ENCODE measurements at regions of chr11 and their contacts with region 1.

Region 1: DNA sequence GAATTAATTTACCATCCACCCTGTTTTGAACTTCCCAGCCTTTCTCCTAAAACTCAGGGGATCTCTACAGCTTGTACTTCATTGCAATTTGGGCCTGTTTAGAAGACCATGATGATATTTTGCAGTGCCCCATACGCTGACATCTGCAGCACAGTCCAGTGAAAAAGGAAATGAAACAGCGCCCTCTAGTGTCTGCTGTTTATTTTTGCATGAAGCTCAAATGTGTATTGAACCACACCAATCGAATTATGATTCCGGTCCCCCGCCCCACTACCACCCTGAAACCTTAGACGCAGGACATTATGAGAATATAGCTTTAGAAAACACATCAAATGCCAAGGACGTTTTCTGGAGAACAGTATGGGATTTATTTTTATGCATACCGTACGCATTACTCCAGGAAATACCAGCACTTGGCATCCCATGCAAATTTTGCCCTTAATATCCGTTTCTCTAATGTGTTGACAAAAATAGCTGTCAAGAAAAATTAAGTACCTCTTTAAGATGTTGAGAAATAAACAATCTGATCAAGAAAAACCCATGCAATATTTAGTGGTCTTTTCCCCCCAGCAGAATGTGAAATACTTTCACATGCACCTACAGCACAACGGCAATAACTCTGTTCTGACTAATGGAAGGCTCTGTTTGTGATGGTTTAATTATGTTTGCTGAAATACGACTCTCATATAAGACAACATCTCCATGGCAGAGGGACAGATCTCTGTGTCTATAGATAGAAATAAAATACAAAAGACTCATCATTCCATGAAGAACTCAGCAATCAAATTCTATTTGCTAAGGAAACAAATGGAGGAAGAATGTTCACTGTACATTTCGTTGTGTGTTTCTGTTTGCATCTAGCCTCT is 93.9 kb downstream of the TECTA start:
- DNase-seq: peak; percentile 69
- H3K4me3 ChIP-seq: no peak overlapping the region; a peak in 1 of 4 replicates
- H3K27ac ChIP-seq: no peak overlapping the region
- H3K4me1 ChIP-seq: peaks cover 0 to 2% of the 10 kb centered on the region in 2 experiments; a peak in 2 of 4 replicates
- H3K27me3 ChIP-seq: no peaks in the 10 kb centered on the region; the same call in 1 of the 2 replicates
- CTCF ChIP-seq: peak; percentile 90
- EP300 ChIP-seq: no peak
- RAD21 ChIP-seq: peak; percentile 86

Region 2: GRCh38 chr11:120929664-120930154 is 265.3 kb before region 1 on chr11:
- CTCF ChIA-PET with region 1: interaction called, 13 read pairs
- POLR2A ChIA-PET with region 1: no interaction called
- DNase-seq: peak; percentile 72
- H3K4me3 ChIP-seq: no peak overlapping the region
- H3K27ac ChIP-seq: no peak overlapping the region
- H3K4me1 ChIP-seq: peaks cover 0 to 16% of the 10 kb centered on the region in 2 experiments; a peak in 2 of 4 replicates
- H3K27me3 ChIP-seq: no peaks in the 10 kb centered on the region
- CTCF ChIP-seq: peak; percentile 59
- EP300 ChIP-seq: no peak
- RAD21 ChIP-seq: peak; percentile 53

Region 3: DNA sequence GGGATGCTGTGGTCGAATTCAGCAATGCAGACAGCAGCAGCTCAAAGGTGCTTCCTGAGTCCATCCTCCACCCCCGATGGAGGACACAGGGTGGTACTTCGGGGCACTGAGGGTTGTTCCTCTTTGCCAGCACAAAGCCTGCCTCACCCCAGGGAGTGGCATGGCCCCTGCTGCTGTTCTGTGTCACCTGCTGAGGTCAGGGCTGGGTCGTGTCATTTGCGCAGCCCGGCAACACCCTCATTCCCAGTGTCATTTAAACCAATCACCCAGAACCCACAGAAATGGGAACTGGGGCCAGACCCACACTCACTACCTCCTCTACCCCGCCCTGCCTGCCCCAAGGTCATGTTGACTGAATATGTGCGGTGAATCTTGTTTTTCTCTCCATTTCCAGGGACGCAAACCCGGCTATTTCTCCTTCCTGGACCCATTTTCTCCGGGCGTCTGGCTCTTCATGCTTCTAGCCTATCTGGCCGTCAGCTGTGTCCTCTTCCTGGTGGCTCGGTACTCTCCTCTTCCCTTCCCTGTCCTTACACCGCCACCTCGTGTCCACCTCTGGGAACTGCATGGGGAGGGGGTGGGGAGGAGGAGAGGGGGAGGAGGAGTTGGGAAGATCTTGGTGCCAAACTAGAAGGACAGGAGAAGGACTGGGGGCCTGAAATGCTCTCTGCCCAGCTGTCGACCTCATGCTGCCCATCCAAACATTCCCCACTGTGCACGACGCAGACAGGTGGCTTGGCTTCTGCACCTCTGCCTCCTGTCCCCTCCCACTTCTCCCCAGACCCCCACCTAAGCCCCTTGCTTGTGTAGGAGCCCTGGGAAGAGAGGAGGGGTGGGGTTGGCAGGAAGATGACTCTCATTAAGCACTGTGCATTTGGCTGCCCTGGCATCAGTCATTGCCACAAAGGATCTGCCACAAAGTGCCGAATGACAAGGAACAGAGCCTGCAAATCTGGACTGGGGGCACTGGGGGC is 242.2 kb before region 1 on chr11:
- CTCF ChIA-PET with region 1: interaction called, 26 read pairs
- POLR2A ChIA-PET with region 1: no interaction called
- DNase-seq: peak; percentile 89
- H3K4me3 ChIP-seq: peak overlapping the region in 1 of 2 experiments; percentile 54; a peak in 1 of 4 replicates
- H3K27ac ChIP-seq: peak overlapping the region in 1 of 2 experiments; percentile 62; a peak in 2 of 4 replicates
- H3K4me1 ChIP-seq: peaks cover 0 to 34% of the 10 kb centered on the region in 2 experiments; a peak in 1 of 4 replicates
- H3K27me3 ChIP-seq: no peaks in the 10 kb centered on the region; the same call in 1 of the 2 replicates
- CTCF ChIP-seq: peak; percentile 73
- EP300 ChIP-seq: no peak
- RAD21 ChIP-seq: peak; percentile 93

Region 4: GRCh38 chr11:121119440-121119839 is 75.5 kb before region 1 on chr11:
- CTCF ChIA-PET with region 1: interaction called, 37 read pairs
- POLR2A ChIA-PET with region 1: no interaction called
- DNase-seq: peak; percentile 51
- H3K4me3 ChIP-seq: no peak overlapping the region
- H3K27ac ChIP-seq: no peak overlapping the region
- H3K4me1 ChIP-seq: no peaks in the 10 kb centered on the region; a peak in 1 of 4 replicates
- H3K27me3 ChIP-seq: no peaks in the 10 kb centered on the region
- CTCF ChIP-seq: no peak
- EP300 ChIP-seq: no peak
- RAD21 ChIP-seq: peak; percentile 21; the same call in 1 of the 2 replicates

Region 5: GRCh38 chr11:121179306-121179705 is 15.7 kb before region 1 on chr11:
- CTCF ChIA-PET with region 1: interaction called, 13 read pairs
- POLR2A ChIA-PET with region 1: no interaction called
- DNase-seq: no peak
- H3K4me3 ChIP-seq: no peak overlapping the region
- H3K27ac ChIP-seq: no peak overlapping the region
- H3K4me1 ChIP-seq: no peaks in the 10 kb centered on the region
- H3K27me3 ChIP-seq: no peaks in the 10 kb centered on the region
- CTCF ChIP-seq: no peak
- EP300 ChIP-seq: no peak
- RAD21 ChIP-seq: no peak

Region 6: DNA sequence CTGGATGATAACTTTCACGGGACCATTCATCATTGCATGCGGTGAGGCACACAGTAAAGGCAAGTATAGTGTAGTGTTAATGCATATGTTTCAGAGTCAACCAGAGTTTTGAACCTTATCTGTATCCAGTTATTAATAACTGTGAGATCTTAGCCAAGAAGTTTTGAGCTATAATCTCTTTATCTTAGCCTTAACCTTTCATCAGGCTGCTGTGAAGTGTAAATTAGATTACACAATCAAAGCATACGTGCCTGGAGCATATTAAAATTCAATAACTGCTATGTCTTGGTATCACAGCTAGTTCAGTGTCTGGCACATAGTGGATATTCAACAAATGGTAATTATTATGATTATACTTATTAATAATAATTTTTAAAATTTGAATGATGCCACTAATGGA is 26.8 kb after region 1 on chr11:
- CTCF ChIA-PET with region 1: interaction called, 26 read pairs
- POLR2A ChIA-PET with region 1: no interaction called
- DNase-seq: no peak
- H3K4me3 ChIP-seq: no peak overlapping the region
- H3K27ac ChIP-seq: no peak overlapping the region
- H3K4me1 ChIP-seq: peaks cover 0 to 13% of the 10 kb centered on the region in 2 experiments; a peak in 1 of 4 replicates
- H3K27me3 ChIP-seq: no peaks in the 10 kb centered on the region; the same call in 1 of the 2 replicates
- CTCF ChIP-seq: no peak
- EP300 ChIP-seq: peak in 1 of 2 experiments; percentile 23; a peak in 1 of 4 replicates
- RAD21 ChIP-seq: no peak

Region 7: GRCh38 chr11:121563900-121564822 is 369.2 kb after region 1 on chr11:
- CTCF ChIA-PET with region 1: no interaction called
- POLR2A ChIA-PET with region 1: no interaction called
- DNase-seq: no peak
- H3K4me3 ChIP-seq: no peak overlapping the region
- H3K27ac ChIP-seq: no peak overlapping the region
- H3K4me1 ChIP-seq: peaks cover 0 to 2% of the 10 kb centered on the region in 2 experiments; a peak in 1 of 4 replicates
- H3K27me3 ChIP-seq: no peaks in the 10 kb centered on the region
- CTCF ChIP-seq: no peak
- EP300 ChIP-seq: no peak
- RAD21 ChIP-seq: no peak

Region 8: GRCh38 chr11:121591405-121592033 is 396.6 kb after region 1 on chr11:
- CTCF ChIA-PET with region 1: interaction called, 10 read pairs
- POLR2A ChIA-PET with region 1: no interaction called
- DNase-seq: peak; percentile 78
- H3K4me3 ChIP-seq: no peak overlapping the region
- H3K27ac ChIP-seq: no peak overlapping the region
- H3K4me1 ChIP-seq: peaks cover 2 to 7% of the 10 kb centered on the region in 2 experiments; a peak in 2 of 4 replicates
- H3K27me3 ChIP-seq: no peaks in the 10 kb centered on the region; the same call in 1 of the 2 replicates
- CTCF ChIP-seq: peak; percentile 86
- EP300 ChIP-seq: no peak
- RAD21 ChIP-seq: peak; percentile 98